Dorsolateral prefrontal cortex (tissue), 120 donors: ENCODE measurements at regions of chr2 and their contacts with region 1.

Region 1: DNA sequence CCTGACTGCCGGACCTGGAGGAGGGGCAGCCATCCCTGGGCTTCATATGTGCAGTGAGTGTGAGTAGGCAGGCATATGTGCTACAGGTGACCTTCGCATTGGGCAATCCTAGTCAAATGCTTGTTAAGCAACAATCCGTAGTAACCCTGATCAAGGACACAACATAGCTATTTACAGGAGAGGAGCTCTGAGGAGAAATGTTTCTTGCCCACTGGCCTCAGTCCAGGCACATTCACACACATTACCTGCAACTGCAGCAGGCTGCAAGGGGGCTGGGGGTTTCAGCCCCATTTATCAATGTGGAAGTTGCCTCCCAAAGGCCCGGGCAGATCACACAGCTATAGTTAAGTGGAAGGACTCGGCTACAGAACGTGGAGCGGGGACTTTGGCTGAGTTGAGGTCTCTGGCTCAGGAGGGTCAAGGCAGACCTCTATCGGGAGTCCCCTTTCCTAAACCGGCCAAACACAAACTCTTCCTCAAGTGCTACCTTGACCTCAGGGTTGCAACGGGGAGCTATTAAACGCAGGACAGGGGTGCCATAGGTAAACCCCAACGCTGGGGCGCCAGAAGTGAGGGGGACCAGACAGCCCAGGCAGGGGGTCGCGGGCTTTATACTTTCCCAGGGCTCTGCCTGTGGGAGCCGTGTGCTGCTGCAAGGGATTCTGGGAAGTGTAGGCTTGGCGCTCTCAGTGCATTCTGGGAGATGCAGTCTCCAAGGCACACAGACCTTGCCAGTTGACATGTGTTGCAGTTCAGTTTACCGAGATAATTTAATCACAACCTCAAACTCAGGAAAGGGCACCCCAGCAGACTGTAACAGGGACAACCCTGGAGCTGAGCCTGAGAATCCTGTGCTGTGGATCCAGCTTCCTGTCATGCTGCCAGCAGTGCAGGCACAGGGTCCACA is 9.4 kb downstream of the KHK start:
- DNase-seq: peak in 9 of 10 donors; percentile 53 to 85 (median 74)
- H3K4me3 ChIP-seq: peak overlapping the region; percentile 1 to 65 (median 44)
- H3K27ac ChIP-seq: peak overlapping the region in 47 of 59 donors; percentile 5 to 76 (median 56)
- H3K27me3 ChIP-seq: no peaks in the 10 kb centered on the region
- CTCF ChIP-seq: peak in 29 of 56 donors; percentile 4 to 46 (median 19)

Region 2: DNA sequence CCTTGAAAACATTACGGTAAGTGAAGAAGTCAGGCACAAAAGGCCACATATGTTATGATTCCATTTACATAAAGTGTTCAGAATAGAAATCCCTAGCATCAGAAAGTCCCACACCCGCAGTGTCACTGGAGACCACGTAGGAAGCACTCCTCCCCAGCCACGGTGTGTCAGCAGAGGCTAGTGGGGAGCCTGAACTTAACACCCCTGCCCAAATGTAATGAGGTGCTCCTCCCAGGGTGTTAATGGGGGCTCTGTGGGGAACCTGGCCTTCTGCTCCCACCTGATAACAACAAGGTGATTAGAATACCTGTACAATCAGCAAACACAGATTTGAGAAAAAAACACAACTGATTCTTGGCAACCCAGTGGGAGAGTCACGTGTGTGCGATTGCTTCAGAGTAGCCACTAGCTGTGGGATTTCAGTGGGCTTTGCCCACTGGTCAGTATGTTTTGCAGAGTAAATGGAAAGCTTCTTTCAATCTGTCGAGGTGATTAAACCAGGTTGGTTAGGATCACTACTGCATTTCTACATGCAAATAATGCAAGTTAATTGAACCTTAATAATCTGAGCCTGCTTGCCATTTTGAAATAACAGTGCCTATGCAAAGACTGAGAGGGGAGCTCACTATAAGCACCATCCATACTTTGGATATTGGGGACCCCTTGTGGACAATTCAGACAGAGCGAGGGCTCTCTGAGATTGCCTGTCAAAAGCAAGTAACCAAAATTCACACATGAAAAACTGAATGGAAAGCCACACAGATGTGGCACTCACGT is 95.2 kb after region 1 on chr2:
- intact Hi-C with region 1: loop called (anchors 2 to 5 kb)
- DNase-seq: peak in 5 of 10 donors; percentile 20 to 74 (median 41)
- H3K4me3 ChIP-seq: no peak overlapping the region
- H3K27ac ChIP-seq: no peak overlapping the region
- H3K27me3 ChIP-seq: no peaks in the 10 kb centered on the region
- CTCF ChIP-seq: peak in 55 of 56 donors; percentile 42 to 81 (median 67)

Region 3: DNA sequence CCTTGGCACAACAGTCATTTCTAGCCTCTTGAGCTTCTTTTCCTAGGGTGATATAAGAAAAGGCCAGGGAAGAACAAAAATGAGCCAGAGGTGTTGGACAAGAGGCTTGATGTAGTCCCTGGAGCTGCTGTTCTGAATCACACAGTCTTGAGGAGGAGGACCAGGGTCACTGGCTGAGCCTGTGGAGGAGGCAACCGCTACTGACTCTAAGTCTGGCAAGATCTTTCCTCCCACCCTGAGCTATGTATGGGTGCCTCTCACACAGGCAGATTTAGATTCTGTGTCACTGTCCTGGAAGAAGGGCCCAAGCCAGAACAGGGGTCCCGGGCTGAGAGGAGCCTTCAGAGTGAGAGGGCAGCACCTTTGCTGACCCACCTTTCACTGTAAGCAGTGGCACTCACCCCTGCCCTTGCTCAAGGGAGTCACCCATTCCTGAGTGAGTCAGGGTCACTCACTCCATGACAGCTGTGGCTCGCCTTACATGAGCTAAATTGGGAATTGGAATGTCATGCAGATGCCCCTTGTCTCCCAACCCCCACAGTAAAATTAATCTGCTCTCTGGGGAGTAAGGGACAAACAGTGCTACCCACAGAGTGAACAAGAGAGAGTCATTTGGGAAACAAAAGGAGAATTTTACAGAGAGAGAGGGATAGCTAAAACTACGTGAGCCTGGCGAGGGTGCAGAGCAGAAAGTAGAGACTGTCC is 186.0 kb after region 1 on chr2 and contains the start of gene TRIM54:
- intact Hi-C with region 1: loop called (anchors 5 kb)
- DNase-seq: peak in 2 of 10 donors; percentile 26 to 38
- H3K4me3 ChIP-seq: no peak within 1 kb of the TSS
- H3K27ac ChIP-seq: peak within 1 kb of the TSS in 5 of 59 donors; percentile 2 to 25 (median 19)
- H3K27me3 ChIP-seq: peaks cover 0 to 4% (median 0%) of the 10 kb centered on the region in 45 donors
- CTCF ChIP-seq: no peak
- total RNA-seq, gene TRIM54: 2.6 to 27.6 (median 9.0) TPM